Right cardiac atrium (tissue), 5 donors: ENCODE measurements at regions of chr20 and their contacts with region 1.

Region 1: DNA sequence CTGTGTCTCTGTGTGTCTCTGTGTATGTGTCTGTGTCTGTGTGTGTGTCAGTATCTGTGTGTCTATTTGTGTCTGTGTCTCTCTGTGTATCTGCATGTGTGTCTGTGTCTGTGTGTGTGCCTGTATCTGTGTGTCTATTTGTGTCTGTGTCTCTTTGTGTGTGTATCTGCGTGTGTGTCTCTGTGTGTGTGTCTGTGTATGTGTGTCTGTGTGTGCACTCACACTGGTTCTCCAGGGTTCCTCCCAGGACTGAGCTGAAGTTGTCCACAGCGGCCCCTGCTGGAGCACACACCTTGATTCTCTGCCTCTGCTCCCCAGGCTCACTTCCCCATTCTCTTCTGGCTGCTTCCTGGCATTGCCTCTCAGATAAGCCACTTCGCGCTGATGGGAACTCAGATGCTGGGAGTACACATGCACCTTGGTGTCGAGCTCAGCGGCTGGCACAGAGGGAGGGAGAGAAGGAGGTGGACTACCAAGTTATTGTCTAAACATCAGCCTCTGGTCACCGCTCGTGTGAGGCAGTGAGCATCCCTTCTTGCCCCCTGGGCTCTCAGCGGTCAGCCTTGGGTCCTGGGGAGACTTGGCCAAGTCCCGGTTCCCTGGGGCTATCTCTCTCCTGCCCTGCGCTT is 104.9 kb upstream of the NXT1 start:
- DNase-seq: peak; percentile 73 to 85 (median 84)
- ATAC-seq: peak; percentile 70 to 82
- H3K4me3 ChIP-seq: no peak overlapping the region
- H3K27ac ChIP-seq: peak overlapping the region; percentile 25
- H3K4me1 ChIP-seq: no peaks in the 10 kb centered on the region
- H3K27me3 ChIP-seq: no peaks in the 10 kb centered on the region

Region 2: DNA sequence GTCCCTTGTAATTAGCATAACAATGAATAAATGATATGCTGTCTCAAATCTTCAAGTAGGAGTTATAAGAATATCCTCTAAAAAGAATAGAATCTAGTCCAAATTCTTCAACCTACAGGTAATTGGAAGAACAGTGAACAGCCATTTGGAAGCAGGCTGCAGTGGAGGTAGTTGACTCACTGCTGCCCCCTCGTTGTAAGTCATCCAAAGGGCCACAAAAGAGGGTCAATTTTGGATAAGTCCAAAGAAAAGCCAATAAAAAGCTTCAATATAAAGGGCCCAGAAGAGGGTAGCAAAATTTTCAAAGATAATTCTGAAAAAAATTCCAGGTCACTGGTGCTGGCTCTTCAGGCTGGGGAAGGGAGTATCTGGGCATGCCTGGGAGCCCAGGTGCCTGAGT is 271.3 kb before region 1 on chr20:
- intact Hi-C with region 1: no loop called
- DNase-seq: no peak
- ATAC-seq: no peak
- H3K4me3 ChIP-seq: no peak overlapping the region
- H3K27ac ChIP-seq: no peak overlapping the region
- H3K4me1 ChIP-seq: peaks cover 4% of the 10 kb centered on the region
- H3K27me3 ChIP-seq: no peaks in the 10 kb centered on the region

Region 3: GRCh38 chr20:23161968-23162696 is 83.5 kb before region 1 on chr20:
- intact Hi-C with region 1: no loop called
- DNase-seq: peak; percentile 84 to 95 (median 93)
- ATAC-seq: peak; percentile 83 to 90
- H3K4me3 ChIP-seq: no peak overlapping the region
- H3K27ac ChIP-seq: peak overlapping the region; percentile 30
- H3K4me1 ChIP-seq: peaks cover 13% of the 10 kb centered on the region
- H3K27me3 ChIP-seq: no peaks in the 10 kb centered on the region

Region 4: DNA sequence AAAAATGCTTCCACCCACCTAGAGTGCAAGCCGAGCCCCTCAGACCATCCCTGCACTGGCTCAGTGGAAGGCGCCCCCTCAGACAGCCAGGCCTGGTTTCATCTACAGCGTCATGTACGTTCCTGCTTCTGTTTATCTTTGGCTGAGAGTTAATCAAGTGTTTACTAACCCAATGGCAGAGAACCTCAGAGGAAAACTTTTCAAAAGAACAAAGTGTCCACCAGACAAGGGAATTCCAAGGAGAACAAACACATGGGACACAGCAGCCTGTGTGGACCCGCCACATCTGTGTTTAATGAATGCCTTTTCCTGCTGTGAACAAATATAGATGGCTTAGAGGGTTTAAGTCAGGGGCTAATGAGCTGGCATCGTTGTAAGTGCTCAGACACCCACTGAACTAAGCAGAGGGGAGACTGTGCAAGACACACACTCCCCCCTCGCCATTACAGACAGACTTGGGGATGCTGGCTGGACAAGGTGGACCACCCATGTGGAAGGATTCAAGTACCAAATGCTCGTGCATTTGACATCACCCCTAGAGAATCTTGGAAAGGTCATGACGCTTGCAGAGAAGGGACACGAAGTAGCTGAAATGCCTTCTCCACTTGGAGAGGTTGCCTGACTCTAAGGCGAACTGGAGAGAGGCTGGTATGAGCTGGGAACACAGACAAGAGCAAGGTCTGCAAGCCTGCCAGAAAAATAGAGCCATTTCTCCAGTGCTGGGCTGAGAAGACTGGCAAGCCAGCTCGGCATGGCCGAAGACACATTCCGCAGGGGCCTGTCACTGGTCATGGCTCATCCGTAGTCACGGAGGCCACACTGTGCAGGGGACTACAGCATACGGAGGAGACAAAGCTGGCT is 51.4 kb after region 1 on chr20:
- intact Hi-C with region 1: loop called in 1 of 4 experiments (anchors 10 kb)
- DNase-seq: peak in 1 of 3 donors; percentile 66
- ATAC-seq: peak in 1 of 2 donors; percentile 42
- H3K4me3 ChIP-seq: no peak overlapping the region
- H3K27ac ChIP-seq: no peak overlapping the region
- H3K4me1 ChIP-seq: no peaks in the 10 kb centered on the region
- H3K27me3 ChIP-seq: peaks cover 3% of the 10 kb centered on the region

Region 5: DNA sequence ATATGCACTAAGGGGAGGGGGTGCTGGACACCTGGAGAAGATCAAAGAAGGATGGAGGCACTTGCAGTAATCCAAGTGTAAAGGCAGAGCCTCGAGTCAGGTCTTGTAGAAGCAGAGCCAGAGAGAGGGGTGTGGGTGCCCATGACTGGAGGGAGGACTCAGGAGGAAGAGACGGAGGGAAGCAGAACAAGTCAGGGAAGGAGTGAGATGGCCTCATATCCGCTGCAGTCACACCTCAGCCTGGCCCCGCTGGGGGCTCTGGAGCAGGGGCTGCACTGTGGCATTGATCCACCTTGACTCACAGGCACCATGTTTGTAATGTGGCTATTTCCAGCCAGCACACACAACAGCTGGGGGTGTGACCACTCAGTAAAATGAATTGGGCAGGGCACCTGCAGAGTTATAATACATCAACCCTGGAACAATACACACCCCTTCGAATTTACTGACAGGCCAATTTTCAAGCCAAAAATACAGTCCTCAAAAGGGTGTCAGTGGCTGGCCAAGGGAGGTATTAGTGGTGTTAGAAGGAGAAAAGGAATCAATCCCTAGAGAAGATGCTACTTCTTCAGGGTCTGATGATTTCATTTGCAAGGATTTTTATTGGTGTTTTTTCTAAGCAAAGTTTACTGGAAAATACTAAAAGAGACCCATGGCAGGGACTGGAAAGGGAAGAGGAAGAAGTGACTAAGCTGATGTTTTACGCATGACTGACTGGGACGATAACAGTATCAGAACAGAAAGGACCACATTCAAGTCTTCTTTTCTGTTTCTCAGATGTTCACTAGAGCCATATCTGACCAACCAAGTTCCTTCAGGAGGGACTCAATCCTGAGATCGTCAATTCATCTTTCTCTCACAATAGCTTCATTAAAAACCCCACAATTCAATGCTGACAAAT is 86.0 kb after region 1 on chr20:
- intact Hi-C with region 1: loop called in 2 of 4 experiments (anchors 10 kb)
- DNase-seq: no peak
- ATAC-seq: peak in 1 of 2 donors; percentile 84
- H3K4me3 ChIP-seq: no peak overlapping the region
- H3K27ac ChIP-seq: no peak overlapping the region
- H3K4me1 ChIP-seq: no peaks in the 10 kb centered on the region
- H3K27me3 ChIP-seq: no peaks in the 10 kb centered on the region

Region 6: DNA sequence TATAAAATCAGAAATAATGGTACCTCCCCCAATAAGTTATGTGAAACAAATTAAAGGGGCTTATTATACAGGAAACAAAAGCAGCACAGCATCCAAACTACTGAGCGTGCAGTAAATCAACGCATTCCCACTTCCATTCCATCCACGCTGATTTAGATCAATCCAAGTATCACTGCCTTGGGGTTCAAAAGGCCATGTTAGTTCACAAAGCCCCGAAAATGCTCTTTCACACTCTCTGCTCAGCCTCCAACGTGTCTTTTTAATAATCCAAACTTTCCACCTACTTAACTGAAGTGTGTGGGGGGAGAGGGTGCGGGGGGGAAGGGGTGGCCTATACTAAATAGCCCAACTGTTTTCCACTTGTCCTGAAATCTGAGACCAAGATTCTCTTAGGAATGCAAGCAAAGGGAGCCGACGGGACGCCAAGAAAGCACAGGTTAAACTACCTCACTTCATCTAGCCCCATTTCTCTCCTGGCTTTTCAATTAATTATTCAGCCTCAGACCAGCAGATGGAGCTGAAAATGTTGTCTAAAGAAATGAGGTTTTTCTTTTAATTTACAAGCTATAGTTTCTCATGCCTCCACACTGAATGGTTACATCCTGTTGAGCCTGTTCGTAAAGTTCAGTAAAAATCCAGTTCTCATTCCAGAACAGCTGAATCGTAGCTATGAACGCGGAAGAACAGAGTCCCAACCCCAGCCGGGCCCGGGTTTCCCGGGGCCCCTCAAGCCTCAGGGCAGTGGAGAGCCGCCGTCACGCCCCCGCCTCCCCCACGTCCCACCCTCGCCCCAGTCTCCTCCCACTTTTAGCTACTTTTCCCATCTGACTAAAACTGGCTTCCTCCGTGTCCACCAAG is 103.9 kb after region 1 on chr20:
- intact Hi-C with region 1: loop called in 1 of 4 experiments (anchors 10 kb)
- DNase-seq: peak in 2 of 3 donors; percentile 50 to 83
- ATAC-seq: peak; percentile 85 to 86
- H3K4me3 ChIP-seq: peak overlapping the region; percentile 83
- H3K27ac ChIP-seq: peak overlapping the region; percentile 100
- H3K4me1 ChIP-seq: no peaks in the 10 kb centered on the region
- H3K27me3 ChIP-seq: no peaks in the 10 kb centered on the region